Endothelial cell of umbilical vein (primary cell): ENCODE measurements at regions of chr10 and their contacts with region 1.

Region 1: DNA sequence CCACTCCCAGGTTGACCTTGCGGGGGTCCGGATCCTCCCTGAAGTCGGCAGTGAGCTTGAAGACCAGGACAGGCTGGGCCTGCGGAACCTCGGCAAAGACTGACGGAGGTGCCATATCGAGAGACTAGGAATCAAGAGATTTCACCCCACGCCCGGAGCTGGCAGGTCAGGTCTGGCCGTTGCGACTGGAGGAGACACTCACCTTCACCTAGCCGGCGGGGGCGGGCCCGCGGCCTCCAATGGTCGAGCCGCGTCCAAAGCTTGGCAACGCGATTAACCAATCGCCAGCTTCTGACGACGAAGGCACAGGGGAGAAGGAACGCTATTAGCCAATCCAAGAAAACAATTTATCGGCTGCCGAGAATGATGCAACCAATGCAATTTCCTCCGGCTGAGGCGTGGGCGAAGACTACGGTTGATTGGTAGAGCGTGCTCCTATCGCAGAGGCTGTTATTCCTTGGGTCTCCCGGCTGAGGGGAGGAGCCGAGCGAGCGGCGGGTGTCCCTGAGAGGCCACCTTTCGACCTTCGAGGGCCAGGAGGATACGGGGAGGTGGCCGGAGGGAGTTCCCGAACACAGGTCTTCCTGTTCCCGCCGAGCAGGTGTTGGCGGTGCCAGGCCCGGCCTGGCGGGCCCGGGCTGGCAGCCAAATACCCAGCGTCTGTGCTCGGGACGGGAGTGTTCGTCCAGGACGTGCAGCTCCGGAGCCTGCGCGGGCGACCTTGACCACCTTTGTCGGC is at the start of gene GOT1:
- DNase-seq: peak; percentile 99
- H3K4me3 ChIP-seq: peak within 1 kb of the TSS; percentile 53 to 87 (median 74)
- H3K27ac ChIP-seq: peak within 1 kb of the TSS; percentile 42
- H3K4me1 ChIP-seq: peaks cover 14% of the 10 kb centered on the region
- H3K27me3 ChIP-seq: no peaks in the 10 kb centered on the region
- CTCF ChIP-seq: no peak
- POLR2A ChIP-seq: peak; percentile 68
- total RNA-seq, gene GOT1: 36.3 and 40.7 TPM in 2 replicates

Region 2: DNA sequence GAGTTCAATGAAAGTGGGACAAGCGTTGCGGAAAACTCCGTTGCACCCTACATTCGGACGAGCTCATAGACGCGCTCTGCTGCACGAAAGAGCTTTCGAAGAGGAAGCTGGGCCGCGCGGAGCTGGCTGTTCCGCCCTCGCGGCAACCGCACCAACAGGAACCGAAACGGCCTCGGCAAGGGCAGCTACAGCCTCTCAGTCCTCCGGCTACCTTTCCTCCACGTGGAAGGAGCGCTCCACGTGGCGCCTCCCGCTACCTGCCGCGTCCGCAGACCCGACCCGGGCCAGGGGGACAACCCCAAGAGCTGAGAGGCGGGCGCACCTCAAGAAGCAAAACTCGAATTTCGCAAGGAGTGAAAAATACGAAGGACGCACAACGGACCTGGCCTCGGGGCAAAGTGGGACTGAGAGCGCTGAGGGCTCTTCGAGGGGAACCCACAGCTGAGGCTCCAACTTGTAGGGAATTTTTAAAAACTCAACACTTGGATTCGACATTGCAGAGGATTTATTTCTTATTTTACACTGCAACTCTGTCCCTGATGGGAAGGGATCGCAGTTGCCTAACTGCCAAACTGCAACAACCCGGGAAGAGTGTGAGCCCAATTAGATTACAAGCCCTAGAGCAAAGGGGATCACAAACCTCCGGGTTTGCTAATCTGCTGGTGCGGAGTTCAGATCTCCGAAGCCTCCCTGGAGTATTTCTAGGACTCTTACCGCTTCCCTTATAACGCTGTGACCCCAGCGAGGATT is 196.4 kb before region 1 on chr10:
- CTCF ChIA-PET with region 1: no interaction called
- POLR2A ChIA-PET with region 1: no interaction called
- dilution Hi-C with region 1: no loop called
- intact Hi-C with region 1: no loop called
- DNase-seq: peak; percentile 26
- H3K4me3 ChIP-seq: peak overlapping the region in 2 of 3 experiments; percentile 22 to 39
- H3K27ac ChIP-seq: no peak overlapping the region
- H3K4me1 ChIP-seq: no peaks in the 10 kb centered on the region
- H3K27me3 ChIP-seq: peaks cover 65 to 78% of the 10 kb centered on the region in 2 experiments
- CTCF ChIP-seq: no peak
- POLR2A ChIP-seq: no peak

Region 3: DNA sequence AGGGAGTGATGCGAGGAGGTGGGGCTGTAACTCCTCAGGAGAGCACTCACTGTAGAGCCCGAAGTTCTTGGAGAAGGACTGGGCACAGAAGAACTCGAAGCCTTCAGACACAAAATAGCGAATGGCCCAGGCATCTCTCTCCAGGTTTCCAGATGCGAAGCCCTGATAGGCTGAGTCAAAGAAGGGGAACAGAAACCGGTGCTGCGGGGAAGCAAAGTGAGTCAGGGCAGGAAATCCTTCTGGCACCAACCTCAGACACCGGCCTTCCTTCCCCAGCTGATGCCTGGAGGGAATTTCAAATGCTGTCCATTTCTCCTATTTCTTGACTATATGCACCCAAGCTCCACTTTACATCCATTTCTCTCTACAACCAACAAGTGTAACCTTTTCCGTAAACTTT is 26.9 kb before region 1 on chr10:
- CTCF ChIA-PET with region 1: interaction called, 14 read pairs
- POLR2A ChIA-PET with region 1: interaction called, 5 read pairs
- dilution Hi-C with region 1: no loop called
- intact Hi-C with region 1: loop called (anchors 1 kb)
- DNase-seq: peak; percentile 78
- H3K4me3 ChIP-seq: no peak overlapping the region
- H3K27ac ChIP-seq: peak overlapping the region; percentile 64
- H3K4me1 ChIP-seq: peaks cover 14% of the 10 kb centered on the region
- H3K27me3 ChIP-seq: no peaks in the 10 kb centered on the region
- CTCF ChIP-seq: no peak
- POLR2A ChIP-seq: no peak

Region 4: DNA sequence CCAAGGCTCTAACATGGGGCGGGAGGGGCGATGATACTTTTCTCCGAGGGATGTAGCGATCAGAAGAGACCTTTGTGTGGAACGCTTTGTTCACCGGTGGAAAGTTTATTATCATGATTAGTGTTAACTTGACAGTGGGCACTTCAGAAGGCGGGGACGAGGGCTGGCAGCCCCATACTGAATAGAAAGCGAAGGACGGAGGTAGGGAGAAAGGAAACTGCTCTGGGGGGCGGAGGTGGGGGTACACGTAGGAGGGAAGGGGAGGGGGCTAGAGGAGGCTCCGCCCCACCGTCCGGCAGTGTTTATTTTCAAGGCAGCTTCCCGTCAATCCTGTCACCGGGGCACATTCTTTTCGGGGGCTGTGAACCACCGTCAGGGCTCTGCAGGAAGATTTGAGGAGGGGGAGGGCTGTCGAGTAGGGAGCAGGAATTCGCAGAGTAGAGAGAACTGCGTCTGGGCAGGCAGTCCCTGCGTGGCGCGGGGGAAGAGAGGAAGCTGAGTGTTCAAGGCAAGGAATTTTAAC is 92.7 kb after region 1 on chr10:
- CTCF ChIA-PET with region 1: interaction called, 14 read pairs
- POLR2A ChIA-PET with region 1: no interaction called
- dilution Hi-C with region 1: no loop called
- intact Hi-C with region 1: loop called (anchors 5 kb)
- DNase-seq: no peak
- H3K4me3 ChIP-seq: peak overlapping the region in 1 of 3 experiments; percentile 14
- H3K27ac ChIP-seq: no peak overlapping the region
- H3K4me1 ChIP-seq: no peaks in the 10 kb centered on the region
- H3K27me3 ChIP-seq: peaks cover 93 to 98% of the 10 kb centered on the region in 2 experiments
- CTCF ChIP-seq: no peak
- POLR2A ChIP-seq: no peak

Region 5: GRCh38 chr10:99834410-99834809 is 403.8 kb after region 1 on chr10:
- CTCF ChIA-PET with region 1: no interaction called
- POLR2A ChIA-PET with region 1: no interaction called
- dilution Hi-C with region 1: no loop called
- intact Hi-C with region 1: no loop called
- DNase-seq: no peak
- H3K4me3 ChIP-seq: no peak overlapping the region
- H3K27ac ChIP-seq: no peak overlapping the region
- H3K4me1 ChIP-seq: no peaks in the 10 kb centered on the region
- H3K27me3 ChIP-seq: no peaks in the 10 kb centered on the region
- CTCF ChIP-seq: no peak
- POLR2A ChIP-seq: no peak